ENCODE measurements at regions of chr22 and their contacts with region 1.

Region 1: DNA sequence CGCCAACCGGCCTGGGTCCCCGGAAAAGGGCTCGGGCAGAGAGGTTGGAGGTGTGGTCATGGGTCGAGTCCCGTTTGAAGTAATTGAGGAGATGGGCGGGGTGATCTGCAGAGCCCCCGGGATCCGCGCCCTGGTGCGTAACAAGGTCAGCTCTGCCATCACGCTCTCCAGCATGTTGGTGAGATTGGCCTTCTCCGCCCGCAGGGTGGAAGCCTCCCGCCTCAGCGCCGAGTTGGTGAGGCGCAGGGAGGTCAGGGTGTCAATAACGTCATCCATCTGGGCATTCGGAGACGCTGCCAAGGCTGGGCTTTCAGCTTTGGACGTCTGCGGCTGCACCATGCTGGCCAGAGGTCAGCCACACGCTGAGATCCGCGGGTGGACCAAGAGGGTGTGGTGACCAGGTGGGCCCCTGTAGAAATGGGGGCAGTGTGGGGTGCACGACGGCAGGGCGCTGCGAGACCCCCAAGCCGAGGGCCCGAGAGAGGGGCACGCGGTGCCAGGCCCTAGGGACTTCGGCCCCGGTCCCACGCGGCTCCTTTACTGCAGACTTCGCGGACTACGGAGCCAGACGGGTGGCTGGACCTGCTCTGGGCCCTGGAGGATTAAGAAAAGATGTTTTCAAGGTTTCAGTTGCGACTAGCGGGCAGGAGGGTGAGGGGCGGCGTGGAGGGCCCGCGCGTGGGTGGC is 672 bp downstream of the RTL6 start:
- DNase-seq: no peak
- H3K4me3 ChIP-seq: peak overlapping the region; percentile 97 to 100
- H3K27ac ChIP-seq: peak overlapping the region; percentile 81 to 88
- H3K4me1 ChIP-seq: peaks cover 4 to 10% of the 10 kb centered on the region in 2 donors
- H3K27me3 ChIP-seq: no peaks in the 10 kb centered on the region
- CTCF ChIP-seq: no peak

Region 2: DNA sequence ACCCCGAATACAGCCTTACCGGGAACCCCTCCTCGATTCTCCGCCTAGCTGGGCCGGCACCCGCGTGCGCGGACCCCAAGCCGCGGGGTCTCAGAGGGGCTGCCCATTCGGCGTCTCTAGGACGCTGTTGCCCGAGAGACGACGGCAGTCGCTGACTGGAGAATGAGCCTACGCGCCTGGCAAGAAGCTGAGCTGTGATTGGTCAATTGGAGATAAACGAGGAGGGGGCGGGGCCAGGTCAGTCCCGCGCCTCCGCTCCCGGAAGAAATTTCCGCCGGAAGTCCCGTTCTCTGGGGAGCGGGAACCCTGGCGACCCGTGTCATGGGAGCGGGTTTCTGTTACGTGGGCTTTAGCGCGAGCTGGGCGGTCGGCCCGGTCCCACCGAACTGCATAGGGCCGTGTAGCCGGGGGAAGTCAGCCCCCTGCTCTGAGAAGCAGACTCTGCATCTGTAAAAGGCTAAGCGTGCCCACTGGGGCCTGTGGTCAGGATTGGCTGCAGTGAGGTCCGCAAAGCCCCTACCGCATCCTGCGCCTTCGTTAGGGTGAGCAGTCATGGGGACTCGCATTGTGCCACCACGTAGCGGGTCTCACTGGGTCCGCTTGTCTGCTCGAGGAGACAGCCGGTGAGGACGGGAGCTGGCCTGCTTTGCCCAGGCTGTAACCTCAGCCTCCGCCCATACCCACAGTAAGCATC is 685.1 kb before region 1 on chr22 and contains the start of gene EFCAB6:
- intact Hi-C with region 1: loop called (anchors 5 kb)
- DNase-seq: peak; percentile 65 to 94
- H3K4me3 ChIP-seq: peak within 1 kb of the TSS; percentile 82 to 89
- H3K27ac ChIP-seq: peak within 1 kb of the TSS; percentile 63 to 81
- H3K4me1 ChIP-seq: peaks cover 3 to 7% of the 10 kb centered on the region in 2 donors
- H3K27me3 ChIP-seq: no peaks in the 10 kb centered on the region
- CTCF ChIP-seq: no peak
- total RNA-seq, gene EFCAB6: 8.6 TPM

Region 3: GRCh38 chr22:43955040-43955882 is 542.1 kb before region 1 on chr22 and contains the start of gene SAMM50:
- intact Hi-C with region 1: loop called (anchors 5 kb)
- DNase-seq: peak; percentile 71 to 95
- H3K4me3 ChIP-seq: peak within 1 kb of the TSS; percentile 89 to 98
- H3K27ac ChIP-seq: peak within 1 kb of the TSS; percentile 79
- H3K4me1 ChIP-seq: peaks cover 9 to 18% of the 10 kb centered on the region in 2 donors
- H3K27me3 ChIP-seq: no peaks in the 10 kb centered on the region
- CTCF ChIP-seq: peak in 1 of 3 experiments; percentile 12
- total RNA-seq, gene SAMM50: 23.6 TPM

Region 4: DNA sequence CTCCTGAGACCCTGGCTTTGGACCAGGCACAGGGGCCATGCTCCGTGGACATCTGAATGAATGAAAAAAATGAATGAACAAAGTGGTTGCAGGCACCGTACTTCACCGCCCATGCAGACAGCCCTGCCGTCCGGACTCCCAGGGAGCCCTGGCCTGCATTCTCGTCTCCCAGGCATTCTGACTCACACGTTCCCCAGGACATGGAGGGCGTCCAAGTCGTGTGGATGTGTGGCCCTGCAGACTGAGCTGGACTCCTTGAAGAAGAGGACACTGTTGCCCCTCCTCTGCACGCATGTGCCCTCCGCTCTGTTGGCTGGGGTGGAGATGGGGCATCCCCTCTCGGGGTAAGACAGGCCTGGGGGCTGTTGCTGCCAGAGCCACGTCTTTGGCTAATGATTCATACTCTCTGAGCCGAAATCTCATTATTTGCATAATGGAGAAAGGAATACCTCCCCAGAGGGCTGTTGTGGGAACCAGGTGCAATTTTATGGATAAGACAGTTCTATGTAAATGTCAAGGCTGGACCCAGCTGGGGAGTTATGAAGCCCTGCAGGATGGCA is 49.0 kb before region 1 on chr22:
- intact Hi-C with region 1: loop called (anchors 2 kb)
- DNase-seq: peak; percentile 38 to 85
- H3K4me3 ChIP-seq: no peak overlapping the region
- H3K27ac ChIP-seq: peak overlapping the region; percentile 10 to 68
- H3K4me1 ChIP-seq: peaks cover 3 to 8% of the 10 kb centered on the region in 2 donors
- H3K27me3 ChIP-seq: no peaks in the 10 kb centered on the region
- CTCF ChIP-seq: no peak

Region 5: DNA sequence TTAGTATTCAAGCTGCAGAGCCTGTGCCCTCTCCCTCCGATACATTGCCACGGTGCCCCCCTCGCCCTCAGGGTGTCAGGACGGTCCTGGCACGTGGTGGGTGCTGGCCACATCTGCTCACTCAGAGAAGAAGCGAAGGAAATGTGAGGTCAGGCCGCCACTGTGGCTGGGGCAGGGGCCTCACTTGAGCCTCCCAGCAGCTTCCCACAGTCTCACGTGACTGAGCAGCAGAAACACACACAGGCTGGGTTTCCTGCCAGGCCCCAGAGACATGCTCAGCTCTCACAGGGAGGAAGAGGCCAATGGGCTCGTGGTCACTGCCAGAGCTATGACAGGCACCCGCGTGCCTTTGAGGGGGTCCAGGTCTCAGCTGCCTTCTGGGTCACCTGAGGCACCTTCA is 166.8 kb after region 1 on chr22:
- intact Hi-C with region 1: no loop called
- DNase-seq: peak; percentile 44 to 74
- H3K4me3 ChIP-seq: no peak overlapping the region
- H3K27ac ChIP-seq: no peak overlapping the region
- H3K4me1 ChIP-seq: no peaks in the 10 kb centered on the region
- H3K27me3 ChIP-seq: peaks cover 1% of the 10 kb centered on the region
- CTCF ChIP-seq: no peak